Activated CD8-positive, alpha-beta T cell treated with anti-CD3 and anti-CD28 coated beads, Interleukin-2, amount 10 ng/mL, durations not matched to agents 7 days and 5 days (primary cell): ENCODE measurements at regions of chr11 and their contacts with region 1.

Region 1: GRCh38 chr11:61446211-61446651 is 16.3 kb downstream of the SDHAF2 start:
- DNase-seq: peak; percentile 83
- ATAC-seq: peak; percentile 93
- H3K4me3 Mint-ChIP-seq: no peak overlapping the region
- H3K27ac Mint-ChIP-seq: no peak overlapping the region
- H3K4me1 Mint-ChIP-seq: peaks cover 2% of the 10 kb centered on the region
- H3K27me3 Mint-ChIP-seq: no peaks in the 10 kb centered on the region

Region 2: GRCh38 chr11:61429691-61430582 is 16.3 kb before region 1 on chr11 and contains the starts of genes CPSF7 and SDHAF2:
- CTCF ChIA-PET with region 1: interaction called, 82 read pairs
- POLR2A ChIA-PET with region 1: interaction called, 13 read pairs
- DNase-seq: peak; percentile 98
- ATAC-seq: peak; percentile 93
- H3K4me3 Mint-ChIP-seq: peak within 1 kb of the TSS; percentile 99
- H3K27ac Mint-ChIP-seq: peak within 1 kb of the TSS; percentile 100
- H3K4me1 Mint-ChIP-seq: peaks cover 56% of the 10 kb centered on the region
- H3K27me3 Mint-ChIP-seq: no peaks in the 10 kb centered on the region
- total RNA-seq, gene CPSF7: 94.8 to 98.4 TPM
- total RNA-seq, gene SDHAF2: 51.6 to 54.3 TPM

Region 3: GRCh38 chr11:61477727-61478148 is 31.5 kb after region 1 on chr11:
- CTCF ChIA-PET with region 1: interaction called, 31 read pairs
- POLR2A ChIA-PET with region 1: no interaction called
- DNase-seq: peak; percentile 66
- ATAC-seq: peak; percentile 49
- H3K4me3 Mint-ChIP-seq: no peak overlapping the region
- H3K27ac Mint-ChIP-seq: no peak overlapping the region
- H3K4me1 Mint-ChIP-seq: peaks cover 5% of the 10 kb centered on the region
- H3K27me3 Mint-ChIP-seq: no peaks in the 10 kb centered on the region

Region 4: GRCh38 chr11:61498767-61499341 is 52.6 kb after region 1 on chr11:
- CTCF ChIA-PET with region 1: no interaction called
- POLR2A ChIA-PET with region 1: no interaction called
- DNase-seq: no peak
- ATAC-seq: no peak
- H3K4me3 Mint-ChIP-seq: no peak overlapping the region
- H3K27ac Mint-ChIP-seq: no peak overlapping the region
- H3K4me1 Mint-ChIP-seq: peaks cover 4% of the 10 kb centered on the region
- H3K27me3 Mint-ChIP-seq: peaks cover 5% of the 10 kb centered on the region

Region 5: GRCh38 chr11:61532139-61533038 is 86.2 kb after region 1 on chr11:
- CTCF ChIA-PET with region 1: interaction called, 15 read pairs
- POLR2A ChIA-PET with region 1: no interaction called
- DNase-seq: peak; percentile 57
- ATAC-seq: peak; percentile 63
- H3K4me3 Mint-ChIP-seq: no peak overlapping the region
- H3K27ac Mint-ChIP-seq: no peak overlapping the region
- H3K4me1 Mint-ChIP-seq: no peaks in the 10 kb centered on the region
- H3K27me3 Mint-ChIP-seq: peaks cover 4% of the 10 kb centered on the region